ENCODE measurements at regions of chr21 and their contacts with region 1.

Region 1: DNA sequence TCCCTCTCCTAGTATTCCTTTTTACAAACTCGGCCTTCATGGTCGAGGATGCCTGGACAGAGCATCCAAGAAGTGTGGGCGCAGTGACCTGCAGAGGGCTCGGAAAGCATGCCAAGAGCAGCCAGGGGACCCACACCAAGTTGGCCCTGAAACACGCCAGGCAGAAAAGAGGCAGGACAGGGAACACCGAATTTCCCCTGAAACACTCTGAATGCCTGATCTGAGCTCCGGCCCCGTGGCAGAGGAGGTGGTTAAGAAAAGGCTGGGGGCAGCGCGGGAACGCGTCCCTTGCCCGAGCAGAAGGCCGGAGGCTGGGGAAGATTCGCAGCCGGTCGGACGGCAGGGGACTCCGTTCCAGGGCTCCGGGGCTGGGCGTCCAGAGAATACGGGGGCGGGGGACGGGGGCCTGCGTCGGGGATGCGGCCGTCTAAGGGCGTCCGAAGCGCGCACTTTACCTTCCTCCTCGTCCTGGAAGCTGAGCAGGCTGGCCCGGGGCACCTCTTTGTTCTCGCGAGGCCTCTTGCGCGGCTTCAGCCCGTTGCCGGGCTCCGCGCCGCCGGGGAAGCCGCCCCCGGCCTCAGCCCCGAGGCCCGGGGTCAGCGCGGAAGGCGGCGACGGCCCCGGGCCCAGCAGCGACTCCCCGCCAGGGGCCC is 558 bp downstream of the PAXBP1 start:
- DNase-seq: peak; percentile 72
- ATAC-seq: peak; percentile 59
- H3K4me3 Mint-ChIP-seq: peak overlapping the region; percentile 96
- H3K27ac Mint-ChIP-seq: peak overlapping the region; percentile 94
- H3K4me1 Mint-ChIP-seq: peaks cover 50% of the 10 kb centered on the region
- H3K27me3 Mint-ChIP-seq: no peaks in the 10 kb centered on the region

Region 2: GRCh38 chr21:32727687-32728455 is 43.1 kb before region 1 on chr21 and contains the start of gene SYNJ1:
- CTCF ChIA-PET with region 1: interaction called, 15 read pairs
- POLR2A ChIA-PET with region 1: interaction called, 31 read pairs
- DNase-seq: peak; percentile 96
- ATAC-seq: peak; percentile 88
- H3K4me3 Mint-ChIP-seq: peak within 1 kb of the TSS; percentile 96
- H3K27ac Mint-ChIP-seq: peak within 1 kb of the TSS; percentile 97
- H3K4me1 Mint-ChIP-seq: peaks cover 31% of the 10 kb centered on the region
- H3K27me3 Mint-ChIP-seq: no peaks in the 10 kb centered on the region
- total RNA-seq, gene SYNJ1: 16.0 to 21.8 TPM

Region 3: DNA sequence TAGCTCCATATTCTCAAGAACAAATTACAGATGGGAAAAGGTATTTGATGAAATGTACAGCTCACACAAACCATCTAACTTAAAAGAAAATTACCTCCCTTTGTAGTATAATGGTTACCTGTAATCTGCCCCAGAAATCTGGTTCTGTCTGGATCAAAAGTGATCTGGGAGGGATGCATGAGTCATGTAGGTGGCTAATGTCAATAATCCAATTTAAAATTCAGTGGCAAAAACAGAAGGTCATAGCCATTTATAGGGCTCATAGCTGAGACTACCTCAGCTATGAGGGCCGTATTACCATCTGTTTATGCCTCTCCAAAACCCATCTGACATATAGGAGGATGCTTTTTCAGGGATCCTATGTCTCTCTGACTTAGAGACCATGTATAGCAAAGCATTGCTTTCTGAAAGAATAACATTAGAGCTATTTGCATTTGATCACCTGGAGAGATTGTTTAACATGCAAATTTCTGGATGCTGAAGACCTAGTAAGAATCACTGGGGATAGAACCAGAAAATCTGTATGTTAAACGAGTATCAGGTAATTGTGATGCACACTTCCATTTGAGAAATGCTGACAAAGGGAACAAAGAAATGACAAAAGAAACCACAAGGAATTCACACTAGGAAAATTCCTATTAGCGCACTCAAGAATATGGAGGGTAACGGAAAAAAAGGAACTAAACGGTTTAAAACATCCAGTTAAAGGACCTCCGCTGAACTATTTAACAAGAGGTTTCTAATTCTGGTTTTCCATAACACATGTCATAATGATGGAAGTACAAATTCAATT is 17.0 kb before region 1 on chr21:
- CTCF ChIA-PET with region 1: interaction called, 20 read pairs
- POLR2A ChIA-PET with region 1: interaction called, 3 read pairs
- DNase-seq: no peak
- ATAC-seq: no peak
- H3K4me3 Mint-ChIP-seq: no peak overlapping the region
- H3K27ac Mint-ChIP-seq: no peak overlapping the region
- H3K4me1 Mint-ChIP-seq: peaks cover 7% of the 10 kb centered on the region
- H3K27me3 Mint-ChIP-seq: no peaks in the 10 kb centered on the region